ENCODE measurements at regions of chr10 and their contacts with region 1.

Region 1: DNA sequence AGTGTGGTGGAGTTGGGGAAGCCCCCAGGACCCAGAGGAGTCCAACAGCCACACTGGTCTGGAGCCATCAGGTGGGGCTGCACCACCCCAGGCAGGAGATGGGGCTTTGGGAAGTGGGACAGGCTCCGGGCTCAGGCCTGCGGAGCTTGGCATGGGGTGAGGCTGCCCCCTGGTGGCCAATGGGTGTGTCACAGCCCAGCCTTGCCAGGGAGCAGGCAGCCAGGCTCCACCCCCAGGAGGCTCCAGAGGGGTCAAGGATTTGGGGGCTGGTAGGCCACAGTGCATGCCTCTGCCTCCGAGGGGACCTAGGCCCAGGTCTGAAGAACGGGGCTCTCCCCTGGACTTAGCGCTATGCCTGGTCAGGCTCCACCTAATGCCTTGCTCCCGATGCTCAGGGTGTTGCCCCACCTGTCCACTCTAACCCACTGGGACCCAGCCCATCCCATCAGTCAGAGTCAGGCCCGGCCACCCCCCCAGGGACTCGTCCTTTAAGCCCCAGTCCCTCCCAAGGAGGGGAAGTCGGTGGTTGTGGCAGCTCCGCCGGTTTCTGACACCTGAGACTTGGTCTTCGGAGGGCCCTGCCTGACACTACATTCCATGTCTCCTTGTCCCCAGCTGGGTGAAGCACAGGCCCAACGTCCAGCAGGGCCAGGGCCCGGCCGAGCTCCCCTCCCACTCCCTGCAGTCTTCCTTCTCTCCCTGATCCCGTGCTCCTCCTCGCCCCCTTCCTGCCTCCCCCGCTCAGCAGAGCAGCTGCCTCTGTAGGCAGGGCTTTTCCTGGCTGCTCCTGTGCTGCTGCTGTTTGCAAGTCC is 11.3 kb upstream of the SAMD8 start:
- DNase-seq: peak; percentile 80 to 92 (median 80)
- ATAC-seq: peak; percentile 71 to 86 (median 82)
- H3K4me3 ChIP-seq: peak overlapping the region in 6 of 12 donors; percentile 2 to 37 (median 8)
- H3K27ac ChIP-seq: peak overlapping the region in 9 of 12 donors; percentile 28 to 83 (median 74)
- H3K4me1 ChIP-seq: peaks cover 0 to 29% (median 10%) of the 10 kb centered on the region in 12 donors
- H3K27me3 ChIP-seq: no peaks in the 10 kb centered on the region
- CTCF ChIP-seq: peak; percentile 93 to 100 (median 99)
- POLR2A ChIP-seq: no peak

Region 2: DNA sequence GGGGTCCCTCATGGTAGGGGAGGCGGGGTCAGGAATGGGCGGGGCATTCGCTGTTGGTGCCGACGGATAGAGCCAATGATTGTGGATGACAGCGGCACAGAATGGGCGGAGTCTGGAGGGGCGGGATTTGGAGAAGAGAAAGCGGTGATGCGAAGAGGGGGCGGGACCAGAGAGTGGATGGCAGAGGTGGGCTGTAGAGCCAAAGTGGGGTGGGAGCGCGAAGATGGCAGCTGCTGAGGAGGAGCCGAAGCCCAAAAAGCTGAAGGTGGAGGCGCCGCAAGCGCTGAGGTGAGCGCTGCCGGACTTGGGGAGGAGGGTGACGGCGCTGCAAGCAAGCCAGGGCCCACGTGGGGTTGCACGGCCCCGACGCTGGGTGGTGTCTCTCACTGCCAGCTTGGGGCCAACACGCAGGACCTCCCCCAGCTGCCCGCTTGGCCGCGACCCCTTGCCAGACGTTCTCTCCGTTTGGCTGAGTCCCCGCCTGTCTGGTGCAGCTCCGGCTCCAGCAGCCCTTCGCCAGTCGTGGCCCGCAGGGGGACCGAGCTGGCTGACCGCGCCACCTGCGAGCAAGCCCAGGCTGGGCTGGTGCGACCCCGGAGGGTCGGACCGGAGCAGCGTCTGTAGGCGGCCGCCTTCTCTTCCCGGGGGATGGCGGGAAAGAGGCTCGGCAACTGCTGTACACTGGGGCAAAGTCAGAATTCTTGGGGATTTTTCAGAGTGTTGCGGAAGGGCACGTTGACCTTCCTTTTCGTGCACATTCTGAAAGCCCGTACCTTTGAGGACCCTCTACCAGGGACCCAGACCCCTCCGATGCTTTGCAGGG is 948.9 kb before region 1 on chr10 and contains the start of gene ADK:
- intact Hi-C with region 1: loop called in 1 of 10 experiments (anchors 10 kb)
- DNase-seq: peak; percentile 99 to 100 (median 100)
- ATAC-seq: peak; percentile 95 to 98 (median 98)
- H3K4me3 ChIP-seq: peak within 1 kb of the TSS; percentile 65 to 96 (median 88)
- H3K27ac ChIP-seq: peak within 1 kb of the TSS; percentile 85 to 97 (median 92)
- H3K4me1 ChIP-seq: peaks cover 0 to 42% (median 32%) of the 10 kb centered on the region in 12 donors
- H3K27me3 ChIP-seq: no peaks in the 10 kb centered on the region
- CTCF ChIP-seq: peak in 6 of 12 donors; percentile 10 to 62 (median 30)
- POLR2A ChIP-seq: peak; percentile 67 to 93
- total RNA-seq, gene ADK: 22.7 to 46.2 (median 39.8) TPM

Region 3: DNA sequence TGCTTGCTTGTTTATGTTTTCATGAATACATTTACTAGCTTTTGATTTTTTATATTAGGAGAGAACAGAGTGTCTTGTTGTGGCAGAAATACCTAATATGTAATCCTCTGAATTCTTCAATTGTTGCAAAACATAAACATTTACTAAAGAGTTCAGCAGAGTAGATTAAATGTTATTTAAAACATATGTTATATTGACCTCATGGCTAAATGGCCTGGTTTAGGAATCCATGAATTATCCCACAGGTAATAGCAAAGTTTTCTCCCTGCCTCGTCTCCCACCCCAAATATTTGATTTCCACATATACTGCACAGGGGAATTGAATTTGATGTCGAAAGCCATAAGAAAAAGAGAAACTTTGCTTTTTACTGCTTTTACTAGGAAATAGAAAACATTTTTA is 837.3 kb before region 1 on chr10:
- intact Hi-C with region 1: loop called (anchors 1 to 5 kb)
- DNase-seq: no peak
- ATAC-seq: no peak
- H3K4me3 ChIP-seq: no peak overlapping the region
- H3K27ac ChIP-seq: no peak overlapping the region
- H3K4me1 ChIP-seq: peaks cover 0 to 4% (median 0%) of the 10 kb centered on the region in 12 donors
- H3K27me3 ChIP-seq: no peaks in the 10 kb centered on the region
- CTCF ChIP-seq: no peak
- POLR2A ChIP-seq: no peak

Region 4: DNA sequence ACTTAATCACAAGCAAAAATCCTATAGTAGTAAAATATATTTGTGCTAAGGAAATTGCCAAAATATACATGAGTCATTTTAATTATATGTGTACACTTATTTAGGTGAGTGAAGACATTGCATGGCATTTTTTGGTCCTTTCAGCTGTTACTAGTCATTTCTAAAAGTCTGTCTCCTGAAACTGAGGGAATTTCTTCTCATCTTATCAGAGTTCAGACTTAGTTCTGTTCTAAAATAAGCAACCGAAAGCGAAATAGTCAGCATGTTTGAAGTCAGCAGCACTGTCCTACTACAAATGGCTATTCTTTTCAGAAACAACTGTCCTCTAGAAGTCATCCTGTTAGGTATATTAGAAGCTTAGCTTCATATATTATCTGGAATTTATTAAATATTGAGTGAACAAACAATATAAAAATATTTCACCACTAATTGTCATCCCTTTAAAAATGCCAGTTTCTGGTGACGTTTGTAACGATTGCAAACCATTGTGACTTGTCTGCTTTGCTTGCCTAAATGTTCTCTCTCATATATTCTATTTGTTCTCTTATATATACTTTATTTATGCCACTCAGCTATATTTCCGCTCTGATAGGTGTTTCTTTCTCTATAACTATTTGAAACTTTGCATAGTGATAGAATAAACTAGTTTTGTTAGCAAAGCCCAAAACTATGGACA is 501.1 kb before region 1 on chr10:
- intact Hi-C with region 1: loop called in 1 of 10 experiments (anchors 10 kb)
- DNase-seq: no peak
- ATAC-seq: peak; percentile 44 to 89 (median 78)
- H3K4me3 ChIP-seq: peak overlapping the region in 9 of 12 donors; percentile 19 to 47 (median 30)
- H3K27ac ChIP-seq: peak overlapping the region; percentile 16 to 80 (median 54)
- H3K4me1 ChIP-seq: peaks cover 0 to 18% (median 2%) of the 10 kb centered on the region in 12 donors
- H3K27me3 ChIP-seq: no peaks in the 10 kb centered on the region
- CTCF ChIP-seq: no peak
- POLR2A ChIP-seq: no peak

Region 5: GRCh38 chr10:74826142-74827044 is 273.8 kb before region 1 on chr10 and contains the start of gene KAT6B:
- intact Hi-C with region 1: loop called in 7 of 10 experiments (anchors 5 to 10 kb)
- DNase-seq: peak; percentile 100
- ATAC-seq: peak; percentile 90 to 97 (median 95)
- H3K4me3 ChIP-seq: peak within 1 kb of the TSS; percentile 67 to 99 (median 92)
- H3K27ac ChIP-seq: peak within 1 kb of the TSS; percentile 93 to 100 (median 99)
- H3K4me1 ChIP-seq: peaks cover 0 to 55% (median 33%) of the 10 kb centered on the region in 12 donors
- H3K27me3 ChIP-seq: no peaks in the 10 kb centered on the region
- CTCF ChIP-seq: peak in 5 of 12 donors; percentile 11 to 44 (median 25)
- POLR2A ChIP-seq: peak in 1 of 2 donors; percentile 71
- total RNA-seq, gene KAT6B: 36.8 to 61.3 (median 46.9) TPM

Region 6: DNA sequence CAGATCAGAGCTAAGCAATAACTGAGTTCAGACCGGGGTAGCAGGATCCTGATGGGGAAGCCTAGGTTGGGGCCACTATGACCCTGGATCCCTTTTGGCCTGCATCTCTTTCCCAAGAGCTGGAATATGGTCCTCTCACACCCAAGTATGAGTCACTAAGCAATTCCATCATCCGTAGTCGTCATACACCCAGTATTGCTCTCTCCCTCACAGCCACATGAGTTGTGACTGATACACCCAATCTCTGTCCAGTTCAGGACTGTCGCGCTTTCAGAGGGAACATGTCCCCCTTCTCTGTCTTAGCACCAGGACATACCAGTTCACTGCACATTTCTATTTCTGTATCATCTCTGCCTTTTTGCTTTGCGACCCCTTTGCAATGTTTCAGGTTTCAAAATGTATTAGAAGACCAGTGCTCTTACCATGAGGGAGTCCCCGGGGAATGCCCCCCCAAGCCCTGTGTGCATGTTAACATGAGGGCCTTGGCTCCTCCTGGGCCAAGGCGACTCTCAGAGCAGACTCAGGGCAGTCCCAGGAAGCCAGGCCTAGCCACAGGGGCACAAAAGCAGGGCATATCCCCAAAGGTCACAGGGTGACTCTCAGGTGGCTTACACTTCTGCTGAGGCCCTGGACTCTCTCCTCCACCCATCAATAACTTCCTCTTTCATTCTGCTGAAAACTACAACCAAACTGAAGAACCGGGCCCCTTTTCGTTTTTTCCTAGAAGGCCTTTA is 64.0 kb before region 1 on chr10:
- intact Hi-C with region 1: loop called in 3 of 10 experiments (anchors 5 to 10 kb)
- DNase-seq: no peak
- ATAC-seq: peak in 1 of 4 donors; percentile 13
- H3K4me3 ChIP-seq: no peak overlapping the region
- H3K27ac ChIP-seq: no peak overlapping the region
- H3K4me1 ChIP-seq: peaks cover 0 to 33% (median 15%) of the 10 kb centered on the region in 12 donors
- H3K27me3 ChIP-seq: no peaks in the 10 kb centered on the region
- CTCF ChIP-seq: no peak
- POLR2A ChIP-seq: no peak

Region 7: DNA sequence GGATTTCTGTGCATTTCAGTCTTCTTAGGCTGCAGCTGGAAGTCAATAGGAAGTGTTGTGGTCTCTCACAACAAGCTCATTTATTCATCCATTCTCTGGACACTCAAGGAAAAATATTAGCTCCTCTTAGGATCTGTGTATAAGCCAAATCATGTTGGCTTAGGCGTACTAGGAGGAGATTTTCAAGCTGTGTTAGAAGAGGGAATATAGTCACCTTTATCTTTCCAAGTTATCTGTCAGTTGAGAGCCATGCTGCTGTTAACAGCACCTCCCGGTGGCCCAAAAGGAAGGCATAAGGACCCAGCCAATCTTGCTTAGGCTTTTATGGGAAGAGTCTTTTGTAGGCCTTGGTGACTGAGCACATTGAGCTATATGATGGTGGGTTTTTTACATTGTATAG is 551.3 kb after region 1 on chr10:
- intact Hi-C with region 1: no loop called
- DNase-seq: no peak
- ATAC-seq: no peak
- H3K4me3 ChIP-seq: no peak overlapping the region
- H3K27ac ChIP-seq: no peak overlapping the region
- H3K4me1 ChIP-seq: peaks cover 0 to 50% (median 26%) of the 10 kb centered on the region in 12 donors
- H3K27me3 ChIP-seq: no peaks in the 10 kb centered on the region
- CTCF ChIP-seq: peak in 2 of 12 donors; percentile 22 to 23
- POLR2A ChIP-seq: no peak